Psoas muscle (tissue), 8 donors: ENCODE measurements at regions of chrX and their contacts with region 1.

Region 1: DNA sequence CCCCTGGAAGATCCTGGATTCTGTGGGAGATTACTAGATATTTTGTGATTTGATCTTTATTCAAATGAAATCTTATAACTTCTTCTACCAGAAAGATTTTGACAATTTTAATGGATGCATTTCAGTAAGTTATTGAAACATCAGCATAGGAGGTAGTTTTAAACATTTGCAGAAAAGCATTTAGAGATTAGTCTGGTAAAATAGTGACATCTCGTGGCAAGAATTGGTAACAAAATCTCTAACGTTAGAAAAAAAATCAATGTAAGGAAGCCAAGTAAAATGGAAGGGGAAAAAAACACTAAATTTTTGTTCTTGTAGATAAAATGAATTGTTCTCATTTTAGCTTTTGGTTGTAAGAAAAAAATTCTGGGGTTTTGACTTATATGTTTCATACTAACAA is 73.3 kb downstream of the TASL start:
- DNase-seq: no peak
- ATAC-seq: no peak
- H3K4me3 ChIP-seq: no peak overlapping the region
- H3K27ac ChIP-seq: no peak overlapping the region
- H3K4me1 ChIP-seq: no peaks in the 10 kb centered on the region
- H3K27me3 ChIP-seq: peaks cover 0 to 12% (median 0%) of the 10 kb centered on the region in 3 donors
- CTCF ChIP-seq: peak; percentile 51

Region 2: GRCh38 chrX:30141966-30142365 is 362.3 kb before region 1 on chrX:
- intact Hi-C with region 1: loop called in 1 of 2 experiments (anchors 10 kb)
- DNase-seq: no peak
- ATAC-seq: no peak
- H3K4me3 ChIP-seq: no peak overlapping the region
- H3K27ac ChIP-seq: no peak overlapping the region
- H3K4me1 ChIP-seq: no peaks in the 10 kb centered on the region
- H3K27me3 ChIP-seq: peaks cover 0 to 2% (median 0%) of the 10 kb centered on the region in 3 donors
- CTCF ChIP-seq: no peak

Region 3: GRCh38 chrX:30275498-30275897 is 228.8 kb before region 1 on chrX:
- intact Hi-C with region 1: loop called in 1 of 2 experiments (anchors 5 kb)
- DNase-seq: no peak
- ATAC-seq: no peak
- H3K4me3 ChIP-seq: no peak overlapping the region
- H3K27ac ChIP-seq: no peak overlapping the region
- H3K4me1 ChIP-seq: no peaks in the 10 kb centered on the region
- H3K27me3 ChIP-seq: peaks cover 0 to 19% (median 0%) of the 10 kb centered on the region in 3 donors
- CTCF ChIP-seq: peak; percentile 31

Region 4: GRCh38 chrX:30468471-30468870 is 35.8 kb before region 1 on chrX:
- intact Hi-C with region 1: no loop called
- DNase-seq: no peak
- ATAC-seq: no peak
- H3K4me3 ChIP-seq: no peak overlapping the region
- H3K27ac ChIP-seq: no peak overlapping the region
- H3K4me1 ChIP-seq: no peaks in the 10 kb centered on the region
- H3K27me3 ChIP-seq: no peaks in the 10 kb centered on the region
- CTCF ChIP-seq: no peak